Naive thymus-derived CD8-positive, alpha-beta T cell (primary cell): ENCODE measurements at regions of chr19 and their contacts with region 1.

Region 1: DNA sequence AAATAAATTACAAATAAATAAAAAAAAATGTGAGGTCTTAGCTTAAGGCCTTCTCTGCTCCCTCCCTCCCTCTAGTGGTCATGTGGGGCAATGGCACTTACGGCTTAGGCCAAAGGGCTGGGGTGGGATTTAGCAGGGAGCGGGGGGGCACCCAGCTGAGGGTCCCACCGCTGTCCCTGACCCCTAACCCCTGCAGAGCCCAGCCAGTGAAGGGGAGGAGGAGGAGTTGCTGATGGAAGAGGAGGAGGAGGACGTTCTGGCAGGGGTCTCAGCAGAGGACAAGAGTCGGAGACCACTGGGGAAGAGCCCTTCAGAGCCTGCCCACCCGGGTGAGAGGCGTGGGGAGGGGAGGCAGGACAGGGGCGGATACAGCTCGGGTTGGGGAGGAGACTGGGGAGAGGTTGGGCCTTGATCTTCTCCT is 9.3 kb downstream of the MPND start:
- DNase-seq: peak; percentile 33 to 86 (median 64)
- ATAC-seq: peak; percentile 74 to 85
- H3K4me3 Mint-ChIP-seq: no peak overlapping the region
- H3K27ac Mint-ChIP-seq: peak overlapping the region in 5 of 10 donors; percentile 48 to 74 (median 57)
- H3K4me1 Mint-ChIP-seq: peaks cover 1 to 6% (median 4%) of the 10 kb centered on the region in 4 donors
- H3K27me3 Mint-ChIP-seq: no peaks in the 10 kb centered on the region

Region 2: GRCh38 chr19:4267101-4267900 is 85.4 kb before region 1 on chr19:
- POLR2A ChIA-PET with region 1: interaction called, 15 read pairs
- DNase-seq: peak; percentile 43 to 81 (median 58)
- ATAC-seq: peak; percentile 60 to 72
- H3K4me3 Mint-ChIP-seq: peak overlapping the region in 1 of 10 donors; percentile 22
- H3K27ac Mint-ChIP-seq: peak overlapping the region in 7 of 10 donors; percentile 12 to 75 (median 70)
- H3K4me1 Mint-ChIP-seq: peaks cover 13 to 34% (median 33%) of the 10 kb centered on the region in 4 donors
- H3K27me3 Mint-ChIP-seq: no peaks in the 10 kb centered on the region